Caco-2 (cell line): ENCODE measurements at regions of chr17 and their contacts with region 1.

Region 1: GRCh38 chr17:75131280-75132017 is at the start of gene NT5C:
- DNase-seq: peak; percentile 86 to 92
- H3K4me3 ChIP-seq: peak within 1 kb of the TSS; percentile 85
- H3K4me3 Mint-ChIP-seq: peak within 1 kb of the TSS; percentile 93
- H3K27ac Mint-ChIP-seq: peak within 1 kb of the TSS; percentile 91
- H3K4me1 ChIP-seq: peaks cover 19% of the 10 kb centered on the region
- H3K4me1 Mint-ChIP-seq: peaks cover 8% of the 10 kb centered on the region
- H3K27me3 ChIP-seq: no peaks in the 10 kb centered on the region
- H3K27me3 Mint-ChIP-seq: no peaks in the 10 kb centered on the region
- CTCF ChIP-seq: peak; percentile 68 to 86
- total RNA-seq, gene NT5C: 59.3 and 68.4 TPM in 2 replicates

Region 2: DNA sequence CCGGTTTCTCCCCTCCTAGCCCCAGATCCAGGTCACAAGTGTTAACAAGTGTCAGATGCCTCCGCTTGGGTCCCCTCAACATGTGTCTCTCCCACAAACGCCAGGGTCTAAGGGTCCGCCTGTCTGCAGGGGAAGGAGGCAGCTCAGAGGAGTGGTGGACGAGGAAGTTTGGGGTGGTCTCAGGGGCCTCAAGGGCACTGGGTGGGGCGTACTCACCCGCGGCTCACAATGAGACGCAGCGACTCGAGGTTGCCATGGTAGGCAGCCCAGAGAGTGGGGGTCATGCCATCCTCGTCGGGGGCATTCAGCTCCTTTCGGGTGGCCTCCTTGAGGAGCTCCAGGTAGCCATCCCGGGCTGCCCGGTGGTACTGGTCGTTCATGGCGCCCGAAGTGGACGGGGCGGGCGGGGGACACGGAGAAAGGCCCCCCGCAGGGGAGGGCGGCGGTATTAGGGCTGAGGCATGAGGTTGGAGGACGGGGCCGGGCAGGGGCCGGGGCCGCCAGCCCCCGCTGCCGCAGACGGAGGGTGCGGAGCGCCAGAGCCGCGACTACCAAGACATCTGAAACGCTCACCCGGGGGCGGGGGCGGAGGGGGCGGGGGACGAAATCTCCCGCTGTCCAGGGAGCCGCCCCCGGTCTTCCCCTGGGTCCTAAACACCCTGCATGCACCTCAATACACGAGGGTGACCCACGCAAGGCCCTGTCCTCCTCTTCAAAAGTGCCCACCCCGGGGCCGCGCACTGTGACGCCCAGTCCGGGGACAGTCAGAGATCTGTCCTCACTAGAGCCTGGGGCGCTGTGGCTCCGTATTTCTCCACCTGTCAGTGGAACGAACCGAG is 208.5 kb before region 1 on chr17 and contains the start of gene USH1G:
- CTCF ChIA-PET with region 1: no interaction called
- POLR2A ChIA-PET with region 1: no interaction called
- intact Hi-C with region 1: no loop called
- DNase-seq: no peak
- H3K4me3 ChIP-seq: peak within 1 kb of the TSS; percentile 49
- H3K4me3 Mint-ChIP-seq: peak within 1 kb of the TSS; percentile 71
- H3K27ac Mint-ChIP-seq: no peak within 1 kb of the TSS
- H3K4me1 ChIP-seq: peaks cover 6% of the 10 kb centered on the region; the same call in 1 of the 2 replicates
- H3K4me1 Mint-ChIP-seq: no peaks in the 10 kb centered on the region
- H3K27me3 ChIP-seq: peaks cover 1% of the 10 kb centered on the region; the same call in 1 of the 2 replicates
- H3K27me3 Mint-ChIP-seq: peaks cover 21% of the 10 kb centered on the region
- CTCF ChIP-seq: no peak
- total RNA-seq, gene USH1G: 0.48 and 0.77 TPM in 2 replicates

Region 3: GRCh38 chr17:75046582-75047289 is 84.7 kb before region 1 on chr17 and contains the starts of genes ATP5PD and KCTD2:
- CTCF ChIA-PET with region 1: no interaction called
- POLR2A ChIA-PET with region 1: interaction called, 10 read pairs
- intact Hi-C with region 1: no loop called
- DNase-seq: peak; percentile 98 to 99
- H3K4me3 ChIP-seq: peak within 1 kb of the TSS; percentile 60
- H3K4me3 Mint-ChIP-seq: peak within 1 kb of the TSS; percentile 95
- H3K27ac Mint-ChIP-seq: peak within 1 kb of the TSS; percentile 98
- H3K4me1 ChIP-seq: peaks cover 7% of the 10 kb centered on the region; the same call in 1 of the 2 replicates
- H3K4me1 Mint-ChIP-seq: no peaks in the 10 kb centered on the region
- H3K27me3 ChIP-seq: no peaks in the 10 kb centered on the region
- H3K27me3 Mint-ChIP-seq: no peaks in the 10 kb centered on the region
- CTCF ChIP-seq: no peak
- total RNA-seq, gene ATP5PD: 316 and 326 TPM in 2 replicates
- total RNA-seq, gene KCTD2: 27.9 and 28.8 TPM in 2 replicates

Region 4: DNA sequence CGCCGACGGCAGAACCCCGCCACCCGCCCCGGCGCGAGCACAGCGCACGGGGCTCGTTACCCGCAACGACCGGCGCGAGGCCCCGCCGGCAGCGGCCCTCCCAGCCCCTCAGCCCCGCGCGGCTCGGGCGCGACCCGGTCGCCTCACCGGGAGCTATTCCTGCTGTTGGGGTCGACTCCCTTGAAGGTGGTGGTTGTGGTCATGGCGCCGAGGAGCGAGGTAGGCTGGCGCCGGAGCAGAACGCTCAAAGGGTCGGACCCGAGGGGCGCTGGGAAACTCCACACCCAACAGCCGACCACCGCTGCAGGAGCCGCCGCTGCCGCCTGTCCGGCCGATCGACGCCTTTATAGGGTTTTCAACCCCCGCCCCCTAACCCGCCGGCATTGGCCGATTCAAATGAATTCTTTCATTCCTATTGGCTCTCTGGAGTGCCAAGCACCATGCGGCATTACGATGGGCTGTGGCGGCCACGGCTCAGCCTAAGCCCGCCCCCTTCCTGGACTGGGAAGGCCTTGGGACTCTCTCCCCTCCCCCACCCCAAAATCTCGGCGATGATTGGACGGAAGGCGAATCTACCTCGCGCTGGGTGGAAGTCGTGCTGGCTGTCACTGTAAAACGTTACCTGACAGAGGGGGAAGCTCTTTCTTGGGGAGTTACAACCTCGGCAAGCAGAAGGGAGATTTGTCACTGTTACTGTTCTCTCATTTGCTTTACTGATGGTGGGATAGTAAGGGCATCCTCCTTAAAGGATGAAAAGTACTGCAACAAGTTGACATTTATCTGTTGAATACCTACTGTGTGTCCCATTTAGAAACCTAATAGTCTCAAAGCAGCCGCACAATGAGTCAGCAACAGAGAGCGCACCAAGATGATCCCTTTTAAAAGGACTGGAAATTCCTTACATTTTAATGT is 23.0 kb after region 1 on chr17 and contains the start of gene JPT1:
- CTCF ChIA-PET with region 1: interaction called, 3 read pairs
- POLR2A ChIA-PET with region 1: no interaction called
- intact Hi-C with region 1: loop called (anchors 2 kb)
- DNase-seq: peak; percentile 99 to 100
- H3K4me3 ChIP-seq: peak within 1 kb of the TSS; percentile 91
- H3K4me3 Mint-ChIP-seq: peak within 1 kb of the TSS; percentile 98
- H3K27ac Mint-ChIP-seq: peak within 1 kb of the TSS; percentile 95
- H3K4me1 ChIP-seq: peaks cover 24% of the 10 kb centered on the region
- H3K4me1 Mint-ChIP-seq: peaks cover 40% of the 10 kb centered on the region
- H3K27me3 ChIP-seq: no peaks in the 10 kb centered on the region
- H3K27me3 Mint-ChIP-seq: no peaks in the 10 kb centered on the region
- CTCF ChIP-seq: no peak
- total RNA-seq, gene JPT1: 210 and 244 TPM in 2 replicates

Region 5: DNA sequence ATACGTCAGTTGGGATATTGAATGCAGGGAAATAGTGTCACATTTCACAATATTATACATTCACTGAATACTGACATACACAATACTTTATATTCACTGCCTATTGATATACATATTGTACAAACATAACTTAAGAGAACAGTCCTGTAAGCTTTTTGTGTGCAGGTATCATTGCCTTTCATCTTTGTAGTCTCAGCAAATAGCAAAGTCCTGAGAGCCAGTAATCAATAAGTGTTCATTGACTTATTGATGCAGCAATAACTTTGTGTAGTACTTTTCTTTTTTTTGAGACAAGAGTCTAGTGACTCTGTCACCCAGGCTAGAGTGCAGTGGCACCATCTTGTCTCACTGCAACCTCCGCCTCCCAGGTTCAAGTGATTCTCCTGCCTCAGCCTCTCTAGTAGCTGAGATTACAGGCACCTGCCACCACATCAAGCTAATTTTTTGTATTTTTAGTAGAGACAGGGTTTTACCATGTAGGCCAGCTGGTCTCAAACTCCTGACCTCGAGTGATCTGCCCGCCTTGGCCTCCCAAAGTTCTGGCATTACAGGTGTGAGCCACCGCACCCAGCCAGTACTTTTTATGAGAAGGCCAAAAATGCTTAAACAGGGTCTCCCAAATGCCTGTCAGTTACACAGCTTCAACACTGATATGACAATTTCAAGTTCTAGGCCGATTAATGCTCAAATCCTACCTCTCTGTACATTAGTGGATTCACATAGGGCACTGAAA is 68.6 kb after region 1 on chr17:
- CTCF ChIA-PET with region 1: interaction called, 3 read pairs
- POLR2A ChIA-PET with region 1: interaction called, 5 read pairs
- intact Hi-C with region 1: loop called (anchors 5 kb)
- DNase-seq: no peak
- H3K4me3 ChIP-seq: no peak overlapping the region
- H3K4me3 Mint-ChIP-seq: no peak overlapping the region
- H3K27ac Mint-ChIP-seq: no peak overlapping the region
- H3K4me1 ChIP-seq: no peaks in the 10 kb centered on the region
- H3K4me1 Mint-ChIP-seq: peaks cover under 1% of the 10 kb centered on the region
- H3K27me3 ChIP-seq: no peaks in the 10 kb centered on the region
- H3K27me3 Mint-ChIP-seq: no peaks in the 10 kb centered on the region
- CTCF ChIP-seq: no peak